ENCODE measurements at regions of chr14 and their contacts with region 1.

Region 1: DNA sequence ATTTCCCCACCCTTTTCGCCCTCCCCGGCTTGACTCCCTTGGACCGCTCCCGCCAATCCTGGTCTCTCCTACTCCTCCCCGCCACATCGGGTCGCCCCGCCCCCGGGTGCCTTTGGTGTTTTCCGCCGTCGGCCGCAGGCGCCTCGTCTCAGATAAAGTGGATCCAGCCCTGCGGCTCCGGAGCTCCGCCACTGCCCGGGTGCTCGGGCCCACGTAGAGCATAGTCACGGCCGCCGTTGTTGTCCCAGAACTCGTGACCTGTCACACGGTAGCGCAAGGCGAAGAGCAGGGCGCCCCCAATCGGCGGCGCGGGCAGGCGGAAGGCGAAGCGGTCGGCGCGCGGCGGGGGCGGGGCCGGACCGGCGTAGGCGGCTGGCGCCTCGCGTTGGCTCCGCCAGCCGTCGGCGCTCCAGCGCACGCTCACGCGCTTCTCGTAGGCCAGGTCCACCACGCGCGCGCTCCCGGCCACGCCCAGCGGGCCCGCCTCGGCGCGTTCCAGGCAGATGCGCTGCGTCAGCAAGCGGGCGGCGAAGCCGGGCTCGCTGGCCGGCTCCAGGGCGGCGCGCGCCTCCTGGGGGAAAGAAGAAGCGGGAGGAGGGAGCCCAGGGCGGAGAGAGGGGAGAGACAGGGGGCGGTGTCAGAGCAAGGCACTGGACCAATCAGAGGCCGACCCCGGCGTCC is 1.2 kb downstream of the PPP1R3E start:
- DNase-seq: peak; percentile 98
- ATAC-seq: peak; percentile 83
- H3K4me3 Mint-ChIP-seq: peak overlapping the region; percentile 85
- H3K27ac Mint-ChIP-seq: peak overlapping the region; percentile 91
- H3K4me1 Mint-ChIP-seq: peaks cover 10% of the 10 kb centered on the region
- H3K27me3 Mint-ChIP-seq: peaks cover 63% of the 10 kb centered on the region
- CTCF ChIP-seq: peak; percentile 60; the same call in 1 of the 2 replicates

Region 2: DNA sequence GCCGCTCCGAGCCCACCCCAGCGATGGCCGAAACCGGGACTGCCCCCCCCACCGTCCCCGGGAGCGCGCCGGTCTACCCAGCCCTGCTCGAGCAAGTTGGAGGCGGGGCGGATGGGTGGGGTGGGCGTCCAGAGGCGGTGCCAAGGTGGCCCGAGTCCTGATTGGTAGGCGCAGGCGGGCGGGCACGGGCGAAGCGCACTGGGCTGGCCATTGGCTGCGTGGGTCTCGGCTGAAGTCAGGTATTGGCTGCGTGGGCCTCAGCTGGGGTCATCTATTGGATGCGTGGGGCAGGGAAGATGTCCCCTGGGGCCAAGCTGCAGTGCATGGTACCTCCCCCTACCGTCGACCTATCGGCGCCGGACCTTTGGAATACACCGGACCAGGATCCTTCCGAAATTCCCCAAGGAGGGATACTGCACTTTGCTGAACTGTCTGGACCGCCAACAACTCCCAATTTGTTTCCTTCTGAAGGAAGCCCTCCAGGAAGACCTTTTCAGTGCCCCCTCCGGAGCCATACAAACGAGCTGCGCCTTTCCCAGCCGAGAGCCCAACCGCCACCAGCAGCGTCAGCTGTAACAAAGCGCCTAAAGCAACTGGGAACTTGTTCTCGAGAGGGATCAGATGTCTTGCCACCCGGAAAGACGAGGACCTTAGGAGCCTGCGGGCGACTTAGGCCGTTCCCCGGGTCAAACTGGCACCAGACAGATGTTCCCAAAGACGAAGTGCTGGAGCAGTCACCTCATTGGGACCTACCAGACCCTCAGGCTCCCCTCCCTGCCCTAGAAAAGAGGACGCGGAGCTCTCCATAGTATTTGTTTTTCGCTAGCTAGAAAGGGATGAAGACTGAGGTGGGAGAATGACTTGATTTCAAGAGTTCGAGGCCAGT is 15.2 kb before region 1 on chr14 and contains the start of gene HOMEZ:
- CTCF ChIA-PET with region 1: interaction called, 23 read pairs
- POLR2A ChIA-PET with region 1: interaction called, 8 read pairs
- DNase-seq: peak; percentile 98
- ATAC-seq: peak; percentile 98
- H3K4me3 Mint-ChIP-seq: peak within 1 kb of the TSS; percentile 93
- H3K27ac Mint-ChIP-seq: peak within 1 kb of the TSS; percentile 100
- H3K4me1 Mint-ChIP-seq: peaks cover 14% of the 10 kb centered on the region
- H3K27me3 Mint-ChIP-seq: peaks cover 62% of the 10 kb centered on the region
- CTCF ChIP-seq: no peak
- total RNA-seq, gene HOMEZ: 9.4 to 10.7 TPM (median 10.1 TPM) in 3 replicates

Region 3: DNA sequence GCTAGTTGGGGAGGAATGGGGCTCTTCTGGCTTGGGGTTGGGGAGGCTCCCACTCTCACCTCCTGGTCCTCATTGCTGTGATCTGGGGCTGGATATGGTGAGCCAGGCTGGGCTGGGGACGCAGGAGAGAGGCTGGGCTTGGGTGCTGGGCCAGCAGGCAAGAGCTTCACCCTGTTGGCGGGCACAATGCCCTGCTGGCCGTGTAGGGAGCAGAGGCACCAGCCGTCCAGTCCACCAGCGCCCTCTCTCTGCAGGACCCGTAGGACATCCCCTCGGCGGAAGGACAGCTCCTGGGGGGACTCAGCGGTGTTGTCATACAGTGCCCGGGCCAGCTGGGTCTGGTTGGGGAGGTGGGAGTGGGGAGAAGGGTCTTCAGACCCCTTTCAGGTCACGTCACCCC is 59.1 kb after region 1 on chr14:
- CTCF ChIA-PET with region 1: interaction called, 10 read pairs
- POLR2A ChIA-PET with region 1: no interaction called
- DNase-seq: peak; percentile 69
- ATAC-seq: peak; percentile 58
- H3K4me3 Mint-ChIP-seq: no peak overlapping the region
- H3K27ac Mint-ChIP-seq: no peak overlapping the region
- H3K4me1 Mint-ChIP-seq: peaks cover 22% of the 10 kb centered on the region
- H3K27me3 Mint-ChIP-seq: peaks cover 6% of the 10 kb centered on the region
- CTCF ChIP-seq: no peak

Region 4: DNA sequence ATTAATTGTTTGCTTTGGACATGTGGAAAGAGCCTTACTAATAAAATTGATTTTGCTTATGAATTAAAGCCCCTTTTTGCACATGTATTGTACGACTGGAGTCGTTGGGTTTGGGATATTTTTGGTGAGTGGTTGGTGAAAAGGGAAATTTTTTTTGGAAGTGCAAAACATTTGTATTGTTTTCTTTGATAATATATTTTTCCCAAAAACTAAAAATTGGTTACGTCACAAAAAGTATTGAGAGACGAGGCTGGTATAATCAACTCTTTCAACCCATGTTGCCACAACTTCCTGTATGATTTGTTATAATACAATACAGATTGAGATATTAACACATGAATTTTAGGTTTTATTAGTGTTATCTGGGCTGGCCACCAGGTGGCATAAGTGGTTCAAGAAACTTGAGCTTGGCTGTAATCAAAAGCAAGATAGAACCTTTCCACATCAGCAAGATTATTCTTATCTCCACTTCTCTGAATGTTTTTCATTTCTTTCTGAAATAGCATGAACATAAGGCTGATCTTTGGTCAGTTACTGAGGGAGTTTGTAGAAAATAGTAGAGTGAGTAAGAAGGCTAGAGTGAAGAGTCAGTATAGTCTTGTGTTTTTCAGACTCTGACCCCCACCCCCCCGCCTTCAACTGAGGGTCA is 176.8 kb after region 1 on chr14:
- CTCF ChIA-PET with region 1: no interaction called
- POLR2A ChIA-PET with region 1: no interaction called
- DNase-seq: peak; percentile 49
- ATAC-seq: no peak
- H3K4me3 Mint-ChIP-seq: no peak overlapping the region
- H3K27ac Mint-ChIP-seq: no peak overlapping the region
- H3K4me1 Mint-ChIP-seq: peaks cover 24% of the 10 kb centered on the region
- H3K27me3 Mint-ChIP-seq: no peaks in the 10 kb centered on the region
- CTCF ChIP-seq: peak; percentile 59

Measured in WTC11 (cell line).